ENCODE measurements at regions of chr9 and their contacts with region 1.

Region 1: DNA sequence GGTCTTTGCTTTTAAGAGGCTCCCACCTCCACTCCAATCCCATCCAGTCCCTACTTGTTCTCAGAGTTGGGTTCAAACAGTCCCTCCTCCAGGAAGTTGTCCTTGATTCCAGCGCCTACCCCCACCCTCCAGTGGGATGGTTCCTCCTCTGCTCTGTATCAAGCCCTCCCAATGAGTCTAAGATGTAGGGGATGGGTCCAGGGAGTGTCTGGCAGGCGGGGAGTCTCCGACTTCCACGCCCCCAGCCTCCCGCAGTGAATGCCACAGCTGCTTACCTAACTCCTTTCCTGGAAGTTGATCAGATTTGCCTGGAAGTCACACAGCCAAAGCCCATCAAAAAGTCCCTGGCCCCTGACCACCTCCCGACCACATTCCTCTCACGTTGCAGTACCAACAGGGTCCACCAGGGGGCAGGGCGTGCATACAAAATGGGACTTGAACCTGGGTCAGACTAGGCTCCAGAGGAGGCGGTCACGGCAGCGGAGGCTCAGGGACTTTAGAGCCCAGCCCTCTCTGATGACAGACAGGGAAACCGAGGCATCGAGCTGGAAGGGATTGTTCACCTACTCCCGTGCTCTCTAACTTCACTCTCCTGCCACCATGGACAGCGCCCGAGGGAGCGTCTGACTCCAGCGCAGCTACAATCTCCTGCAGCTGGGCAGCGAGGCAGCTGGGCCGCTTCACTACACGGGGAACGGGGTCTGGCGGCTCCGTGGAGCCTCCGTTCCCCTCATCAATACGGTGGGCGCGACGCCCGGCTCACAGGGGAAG is 25.0 kb upstream of the TDRD7 start:
- DNase-seq: peak; percentile 59 to 99
- H3K4me3 ChIP-seq: no peak overlapping the region; a peak in 1 of 8 replicates
- H3K27ac ChIP-seq: no peak overlapping the region
- H3K4me1 ChIP-seq: peaks cover 0 to 19% (median 9%) of the 10 kb centered on the region in 4 experiments; a peak in 6 of 7 replicates
- H3K27me3 ChIP-seq: no peaks in the 10 kb centered on the region; a peak in 1 of 7 replicates
- CTCF ChIP-seq: peak; percentile 92 to 99 (median 96)
- EP300 ChIP-seq: no peak
- POLR2A ChIP-seq: no peak
- RAD21 ChIP-seq: peak; percentile 90

Region 2: GRCh38 chr9:97348866-97349265 is 38.1 kb before region 1 on chr9:
- CTCF ChIA-PET with region 1: interaction called, 14 read pairs
- POLR2A ChIA-PET with region 1: no interaction called
- DNase-seq: no peak
- H3K4me3 ChIP-seq: no peak overlapping the region
- H3K27ac ChIP-seq: no peak overlapping the region
- H3K4me1 ChIP-seq: no peaks in the 10 kb centered on the region
- H3K27me3 ChIP-seq: 0 out of 7 replicates have a peak, but pooled peaks cover 0 to 2% (median 0%) of the 10 kb centered on the region in 4 experiments
- CTCF ChIP-seq: no peak
- EP300 ChIP-seq: no peak
- POLR2A ChIP-seq: no peak
- RAD21 ChIP-seq: no peak

Region 3: DNA sequence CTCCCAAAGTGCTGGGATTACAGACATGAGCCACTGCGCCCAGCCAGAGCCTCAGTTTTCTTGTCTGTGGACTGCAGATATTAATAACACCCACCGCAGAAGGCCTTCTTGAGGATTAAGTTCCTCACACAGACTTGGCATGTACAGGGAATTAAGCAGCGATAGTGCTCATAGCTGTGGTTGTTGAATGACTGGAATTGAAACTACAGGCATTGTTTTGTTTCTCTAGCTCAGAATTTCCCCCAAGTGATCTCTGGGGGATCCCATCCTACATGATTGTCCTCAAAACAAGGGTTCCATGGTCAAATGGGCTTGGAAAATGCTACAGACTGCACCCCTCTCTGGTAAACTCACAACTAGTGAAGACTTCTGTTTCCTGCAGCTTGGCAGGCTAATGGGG is 19.2 kb before region 1 on chr9:
- CTCF ChIA-PET with region 1: interaction called, 10 read pairs
- POLR2A ChIA-PET with region 1: no interaction called
- DNase-seq: no peak
- H3K4me3 ChIP-seq: no peak overlapping the region
- H3K27ac ChIP-seq: no peak overlapping the region
- H3K4me1 ChIP-seq: peaks cover 0 to 3% (median 0%) of the 10 kb centered on the region in 4 experiments; a peak in 3 of 7 replicates
- H3K27me3 ChIP-seq: 0 out of 7 replicates have a peak, but pooled peaks cover 0 to 2% (median 0%) of the 10 kb centered on the region in 4 experiments
- CTCF ChIP-seq: no peak
- EP300 ChIP-seq: no peak
- POLR2A ChIP-seq: no peak
- RAD21 ChIP-seq: no peak

Region 4: DNA sequence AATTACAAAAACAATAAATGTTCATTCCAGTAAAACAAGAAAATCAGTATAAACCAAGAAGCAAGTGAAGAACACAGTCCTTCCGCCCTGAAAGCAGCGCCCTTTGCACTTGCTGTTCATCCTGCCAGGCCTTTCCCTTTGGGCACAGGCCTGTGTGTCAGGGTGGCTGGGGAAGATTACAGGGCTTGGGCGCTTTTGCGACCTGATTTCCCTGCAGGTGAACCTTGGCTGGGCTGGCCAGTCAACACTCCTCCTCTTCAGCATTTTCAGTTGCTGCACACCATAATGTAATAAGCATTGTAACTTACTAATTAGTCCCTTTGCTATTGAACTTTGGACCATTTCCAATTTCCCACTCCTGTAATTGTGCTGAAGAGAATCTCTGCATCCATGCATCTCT is 13.6 kb before region 1 on chr9:
- CTCF ChIA-PET with region 1: interaction called, 31 read pairs
- POLR2A ChIA-PET with region 1: interaction called, 3 read pairs
- DNase-seq: no peak
- H3K4me3 ChIP-seq: no peak overlapping the region
- H3K27ac ChIP-seq: no peak overlapping the region
- H3K4me1 ChIP-seq: no peaks in the 10 kb centered on the region
- H3K27me3 ChIP-seq: no peaks in the 10 kb centered on the region
- CTCF ChIP-seq: no peak
- EP300 ChIP-seq: no peak
- POLR2A ChIP-seq: no peak
- RAD21 ChIP-seq: no peak

Region 5: GRCh38 chr9:97398999-97399758 is 12.3 kb after region 1 on chr9:
- CTCF ChIA-PET with region 1: interaction called, 140 read pairs
- POLR2A ChIA-PET with region 1: interaction called, 7 read pairs
- DNase-seq: peak; percentile 71 to 92
- H3K4me3 ChIP-seq: no peak overlapping the region
- H3K27ac ChIP-seq: no peak overlapping the region
- H3K4me1 ChIP-seq: peaks cover 0 to 5% (median 0%) of the 10 kb centered on the region in 4 experiments; a peak in 1 of 7 replicates
- H3K27me3 ChIP-seq: peaks cover 0 to 2% (median 0%) of the 10 kb centered on the region in 4 experiments; a peak in 2 of 7 replicates
- CTCF ChIP-seq: peak; percentile 92 to 99 (median 99)
- EP300 ChIP-seq: no peak
- POLR2A ChIP-seq: no peak
- RAD21 ChIP-seq: peak; percentile 83 to 88

Region 6: GRCh38 chr9:97406620-97407177 is 19.8 kb after region 1 on chr9:
- CTCF ChIA-PET with region 1: interaction called, 140 read pairs
- POLR2A ChIA-PET with region 1: interaction called, 3 read pairs
- DNase-seq: no peak
- H3K4me3 ChIP-seq: no peak overlapping the region
- H3K27ac ChIP-seq: no peak overlapping the region
- H3K4me1 ChIP-seq: no peaks in the 10 kb centered on the region
- H3K27me3 ChIP-seq: peaks cover 0 to 3% (median 2%) of the 10 kb centered on the region in 4 experiments; a peak in 3 of 7 replicates
- CTCF ChIP-seq: no peak
- EP300 ChIP-seq: no peak
- POLR2A ChIP-seq: no peak
- RAD21 ChIP-seq: no peak

Region 7: GRCh38 chr9:97484134-97484533 is 97.2 kb after region 1 on chr9:
- CTCF ChIA-PET with region 1: no interaction called
- POLR2A ChIA-PET with region 1: no interaction called
- DNase-seq: no peak
- H3K4me3 ChIP-seq: no peak overlapping the region
- H3K27ac ChIP-seq: no peak overlapping the region
- H3K4me1 ChIP-seq: no peaks in the 10 kb centered on the region
- H3K27me3 ChIP-seq: peaks cover 0 to 3% (median 0%) of the 10 kb centered on the region in 4 experiments; a peak in 2 of 7 replicates
- CTCF ChIP-seq: no peak
- EP300 ChIP-seq: no peak
- POLR2A ChIP-seq: no peak
- RAD21 ChIP-seq: no peak

Region 8: DNA sequence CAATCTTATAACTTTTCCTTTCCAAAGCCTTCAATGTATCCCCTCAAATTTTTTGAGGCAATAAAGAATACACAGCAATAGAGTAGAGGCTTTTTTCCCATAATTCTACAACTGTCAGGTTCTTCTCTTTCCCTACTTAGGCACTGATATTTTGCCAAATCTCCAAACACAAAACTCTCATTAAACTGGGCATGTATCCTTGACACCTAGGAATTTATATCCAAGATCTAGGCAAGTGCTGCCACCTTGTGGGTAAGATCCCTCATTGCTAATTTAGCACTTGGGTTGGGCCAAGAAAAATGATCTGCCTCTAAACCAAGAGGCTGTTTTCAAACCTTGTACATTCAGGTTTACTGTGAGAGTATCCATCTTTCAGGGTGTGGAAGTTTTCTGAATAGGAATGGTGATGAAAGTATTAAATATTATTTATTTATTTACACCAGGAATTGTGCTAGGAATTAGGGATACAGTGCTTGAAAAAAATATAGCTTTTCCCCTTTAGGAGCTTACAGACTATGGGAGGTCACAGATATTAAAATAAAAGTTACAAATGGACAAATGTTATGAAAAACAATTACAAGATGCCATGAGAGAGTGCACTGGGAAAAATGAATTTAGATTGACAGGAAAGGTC is 228.6 kb after region 1 on chr9:
- CTCF ChIA-PET with region 1: interaction called, 10 read pairs
- POLR2A ChIA-PET with region 1: interaction called, 6 read pairs
- DNase-seq: peak in 1 of 2 experiments; percentile 66
- H3K4me3 ChIP-seq: no peak overlapping the region
- H3K27ac ChIP-seq: no peak overlapping the region
- H3K4me1 ChIP-seq: no peaks in the 10 kb centered on the region
- H3K27me3 ChIP-seq: no peaks in the 10 kb centered on the region
- CTCF ChIP-seq: peak in 2 of 3 experiments; percentile 69 to 83; a peak in 3 of 4 replicates
- EP300 ChIP-seq: no peak
- POLR2A ChIP-seq: no peak
- RAD21 ChIP-seq: peak; percentile 76 to 84